ENCODE measurements at regions of chr19 and their contacts with region 1.

Region 1: DNA sequence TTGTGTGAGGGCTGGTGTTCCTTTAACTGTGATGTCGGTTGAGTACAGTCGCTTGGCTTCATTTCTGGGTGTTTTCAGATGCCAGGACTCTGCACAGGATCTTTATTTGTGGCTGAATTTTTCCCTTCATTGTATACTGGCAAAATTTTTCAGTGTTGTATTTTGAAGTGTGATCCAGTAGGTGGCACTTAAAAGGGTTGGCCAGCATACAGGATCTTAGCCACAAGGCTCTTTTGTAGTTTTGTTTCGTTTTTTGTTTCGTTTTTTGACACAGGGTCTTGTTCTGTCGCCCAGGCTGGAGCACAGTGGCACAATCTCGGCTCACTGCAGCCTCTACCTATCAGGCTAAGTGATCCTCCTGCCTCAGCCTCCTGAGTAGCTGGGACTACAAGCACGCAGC is 8.7 kb downstream of the FCAR start:
- DNase-seq: peak; percentile 35
- ATAC-seq: peak; percentile 75
- H3K4me3 ChIP-seq: no peak overlapping the region
- H3K27ac ChIP-seq: no peak overlapping the region; the same call in 1 of the 2 replicates
- H3K4me1 ChIP-seq: peaks cover 3% of the 10 kb centered on the region; the same call in 1 of the 2 replicates
- H3K27me3 ChIP-seq: no peaks in the 10 kb centered on the region; a peak in 1 of 4 replicates
- CTCF ChIP-seq: peak; percentile 20 to 38 (median 33); a peak in 3 of 6 replicates
- EP300 ChIP-seq: no peak
- POLR2A ChIP-seq: no peak
- RAD21 ChIP-seq: peak; percentile 9; the same call in 1 of the 2 replicates

Region 2: GRCh38 chr19:54851353-54851752 is 31.4 kb before region 1 on chr19:
- CTCF ChIA-PET with region 1: no interaction called
- POLR2A ChIA-PET with region 1: no interaction called
- RAD21 ChIA-PET with region 1: no interaction called
- SMC1A ChIA-PET with region 1: no interaction called
- in situ Hi-C with region 1: no loop called
- intact Hi-C with region 1: no loop called
- DNase-seq: no peak
- ATAC-seq: no peak
- H3K4me3 ChIP-seq: no peak overlapping the region
- H3K27ac ChIP-seq: no peak overlapping the region
- H3K4me1 ChIP-seq: no peaks in the 10 kb centered on the region
- H3K27me3 ChIP-seq: no peaks in the 10 kb centered on the region; a peak in 2 of 4 replicates
- CTCF ChIP-seq: no peak
- EP300 ChIP-seq: no peak
- POLR2A ChIP-seq: no peak
- RAD21 ChIP-seq: no peak

Region 3: DNA sequence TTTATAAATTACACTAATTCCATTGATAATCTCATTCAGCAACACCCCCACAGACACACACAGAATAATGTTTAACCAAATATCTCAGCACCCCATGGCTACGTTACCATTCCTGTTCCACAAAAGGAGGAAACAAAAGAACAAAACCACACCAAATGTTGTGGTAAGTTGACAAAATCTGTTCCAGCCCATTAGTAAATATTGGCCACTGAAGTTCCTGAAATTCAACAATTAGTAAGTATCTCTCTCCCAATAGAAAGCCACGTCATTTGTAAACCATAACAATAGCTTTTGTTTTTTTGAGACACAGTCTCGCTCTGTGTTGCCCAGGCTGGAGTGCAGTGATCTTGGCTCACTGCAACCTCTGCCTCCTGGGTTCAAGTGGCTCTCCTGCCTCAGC is 11.1 kb before region 1 on chr19:
- CTCF ChIA-PET with region 1: no interaction called
- POLR2A ChIA-PET with region 1: no interaction called
- RAD21 ChIA-PET with region 1: no interaction called
- SMC1A ChIA-PET with region 1: no interaction called
- in situ Hi-C with region 1: no loop called
- intact Hi-C with region 1: no loop called
- DNase-seq: no peak
- ATAC-seq: no peak
- H3K4me3 ChIP-seq: no peak overlapping the region
- H3K27ac ChIP-seq: no peak overlapping the region
- H3K4me1 ChIP-seq: no peaks in the 10 kb centered on the region
- H3K27me3 ChIP-seq: no peaks in the 10 kb centered on the region; a peak in 1 of 4 replicates
- CTCF ChIP-seq: no peak
- EP300 ChIP-seq: no peak
- POLR2A ChIP-seq: no peak
- RAD21 ChIP-seq: no peak

Region 4: GRCh38 chr19:54916822-54917221 is 34.1 kb after region 1 on chr19:
- CTCF ChIA-PET with region 1: interaction called, 5 read pairs
- POLR2A ChIA-PET with region 1: interaction called, 3 read pairs
- RAD21 ChIA-PET with region 1: interaction called, 5 read pairs
- SMC1A ChIA-PET with region 1: interaction called, 3 read pairs
- in situ Hi-C with region 1: no loop called
- intact Hi-C with region 1: loop called (anchors 1 kb)
- DNase-seq: peak; percentile 51
- ATAC-seq: peak; percentile 58
- H3K4me3 ChIP-seq: no peak overlapping the region
- H3K27ac ChIP-seq: no peak overlapping the region
- H3K4me1 ChIP-seq: peaks cover 10% of the 10 kb centered on the region
- H3K27me3 ChIP-seq: no peaks in the 10 kb centered on the region
- CTCF ChIP-seq: no peak
- EP300 ChIP-seq: no peak
- POLR2A ChIP-seq: no peak
- RAD21 ChIP-seq: no peak

Region 5: GRCh38 chr19:55058781-55059539 is 176.2 kb after region 1 on chr19:
- CTCF ChIA-PET with region 1: no interaction called
- POLR2A ChIA-PET with region 1: no interaction called
- RAD21 ChIA-PET with region 1: no interaction called
- SMC1A ChIA-PET with region 1: no interaction called
- in situ Hi-C with region 1: no loop called
- intact Hi-C with region 1: loop called (anchors 5 kb)
- DNase-seq: no peak
- ATAC-seq: no peak
- H3K4me3 ChIP-seq: no peak overlapping the region
- H3K27ac ChIP-seq: no peak overlapping the region
- H3K4me1 ChIP-seq: no peaks in the 10 kb centered on the region
- H3K27me3 ChIP-seq: no peaks in the 10 kb centered on the region
- CTCF ChIP-seq: no peak
- EP300 ChIP-seq: no peak
- POLR2A ChIP-seq: no peak
- RAD21 ChIP-seq: no peak

Region 6: DNA sequence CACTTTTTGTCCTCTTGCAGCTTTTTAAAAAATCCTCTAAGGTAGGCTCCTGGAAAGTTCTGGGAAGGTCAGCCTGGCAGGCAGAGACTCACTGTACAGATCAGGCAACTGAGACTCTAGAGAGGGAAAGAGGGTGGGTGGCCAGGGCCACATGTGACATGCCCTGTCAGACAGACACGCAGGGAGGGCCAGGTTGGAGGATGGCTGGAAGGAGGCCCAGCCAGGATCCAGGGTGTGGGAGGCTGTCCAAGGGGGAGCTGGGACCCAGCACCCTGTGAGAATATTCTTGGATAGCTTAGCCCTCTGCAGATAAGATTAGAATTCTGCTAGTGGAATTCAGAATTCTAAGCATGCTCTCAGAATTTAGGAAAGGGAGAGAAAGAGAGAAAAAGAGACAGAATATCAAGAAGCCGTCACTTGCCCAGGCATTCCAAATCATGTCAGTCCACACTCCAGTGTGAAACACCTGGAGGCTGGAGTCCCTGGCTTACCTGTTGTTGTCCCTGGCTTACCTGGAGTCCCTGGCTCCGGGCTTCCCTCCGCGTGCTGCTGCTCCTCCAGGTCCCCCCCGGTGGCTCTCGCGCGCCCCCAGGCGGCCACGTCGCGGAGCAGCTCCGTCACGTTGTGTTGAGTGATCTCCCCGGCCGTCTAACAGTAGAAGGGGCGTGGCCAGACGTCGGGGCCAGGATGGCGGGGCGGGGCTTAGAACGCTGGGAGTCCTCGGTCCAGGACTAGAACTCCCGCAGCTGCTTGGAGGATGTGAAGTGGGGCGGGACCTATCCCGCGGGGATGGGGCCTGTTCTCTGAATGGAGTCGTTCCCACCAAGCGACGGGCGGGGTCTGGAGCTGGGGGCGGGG is 277.6 kb after region 1 on chr19:
- CTCF ChIA-PET with region 1: interaction called, 6 read pairs
- POLR2A ChIA-PET with region 1: no interaction called
- RAD21 ChIA-PET with region 1: no interaction called
- SMC1A ChIA-PET with region 1: no interaction called
- in situ Hi-C with region 1: no loop called
- intact Hi-C with region 1: loop called (anchors 5 kb)
- DNase-seq: peak; percentile 32
- ATAC-seq: peak; percentile 99
- H3K4me3 ChIP-seq: no peak overlapping the region
- H3K27ac ChIP-seq: no peak overlapping the region
- H3K4me1 ChIP-seq: no peaks in the 10 kb centered on the region
- H3K27me3 ChIP-seq: no peaks in the 10 kb centered on the region; a peak in 2 of 4 replicates
- CTCF ChIP-seq: peak; percentile 90 to 98 (median 94)
- EP300 ChIP-seq: no peak
- POLR2A ChIP-seq: no peak
- RAD21 ChIP-seq: peak; percentile 81

Measured in GM12878 (cell line).